ENCODE measurements at regions of chr3 and their contacts with region 1.

Region 1: GRCh38 chr3:184017672-184018423 is at the start of gene ABCC5:
- DNase-seq: peak; percentile 88
- H3K4me3 Mint-ChIP-seq: peak within 1 kb of the TSS; percentile 98
- H3K27ac Mint-ChIP-seq: peak within 1 kb of the TSS; percentile 77
- H3K4me1 Mint-ChIP-seq: peaks cover 16% of the 10 kb centered on the region
- H3K27me3 Mint-ChIP-seq: no peaks in the 10 kb centered on the region
- total RNA-seq, gene ABCC5: 11.2 to 12.0 TPM

Region 2: GRCh38 chr3:183895296-183895695 is 122.6 kb before region 1 on chr3:
- CTCF ChIA-PET with region 1: interaction called, 27 read pairs
- intact Hi-C with region 1: loop called (anchors 1 kb)
- DNase-seq: peak; percentile 41
- H3K4me3 Mint-ChIP-seq: no peak overlapping the region
- H3K27ac Mint-ChIP-seq: no peak overlapping the region
- H3K4me1 Mint-ChIP-seq: peaks cover 3% of the 10 kb centered on the region
- H3K27me3 Mint-ChIP-seq: no peaks in the 10 kb centered on the region

Region 3: GRCh38 chr3:183904833-183905780 is 112.7 kb before region 1 on chr3:
- CTCF ChIA-PET with region 1: no interaction called
- intact Hi-C with region 1: loop called (anchors 1 kb)
- DNase-seq: no peak
- H3K4me3 Mint-ChIP-seq: no peak overlapping the region
- H3K27ac Mint-ChIP-seq: no peak overlapping the region
- H3K4me1 Mint-ChIP-seq: no peaks in the 10 kb centered on the region
- H3K27me3 Mint-ChIP-seq: no peaks in the 10 kb centered on the region

Region 4: GRCh38 chr3:184005941-184006507 is 11.8 kb before region 1 on chr3:
- CTCF ChIA-PET with region 1: interaction called, 12 read pairs
- intact Hi-C with region 1: no loop called
- DNase-seq: peak; percentile 61
- H3K4me3 Mint-ChIP-seq: no peak overlapping the region
- H3K27ac Mint-ChIP-seq: no peak overlapping the region
- H3K4me1 Mint-ChIP-seq: peaks cover 10% of the 10 kb centered on the region
- H3K27me3 Mint-ChIP-seq: no peaks in the 10 kb centered on the region

Measured in activated naive CD4-positive, alpha-beta T cell treated with anti-CD3 and anti-CD28 coated beads for 36 hours (primary cell).